ENCODE measurements at regions of chr10 and their contacts with region 1.

Region 1: GRCh38 chr10:109852475-109853037 is 70.8 kb downstream of the XPNPEP1 start:
- DNase-seq: peak; percentile 50
- ATAC-seq: peak; percentile 96
- H3K4me3 ChIP-seq: no peak overlapping the region
- H3K27ac ChIP-seq: no peak overlapping the region
- H3K4me1 ChIP-seq: no peaks in the 10 kb centered on the region
- H3K27me3 ChIP-seq: peaks cover 0 to 4% of the 10 kb centered on the region in 2 experiments; a peak in 1 of 5 replicates
- CTCF ChIP-seq: peak; percentile 92
- EP300 ChIP-seq: no peak
- POLR2A ChIP-seq: no peak
- RAD21 ChIP-seq: peak; percentile 68

Region 2: GRCh38 chr10:109411917-109412316 is 440.6 kb before region 1 on chr10:
- CTCF ChIA-PET with region 1: no interaction called
- POLR2A ChIA-PET with region 1: no interaction called
- in situ Hi-C with region 1: no loop called
- intact Hi-C with region 1: loop called (anchors 5 kb)
- DNase-seq: peak; percentile 5
- ATAC-seq: peak; percentile 82
- H3K4me3 ChIP-seq: no peak overlapping the region
- H3K27ac ChIP-seq: no peak overlapping the region
- H3K4me1 ChIP-seq: no peaks in the 10 kb centered on the region
- H3K27me3 ChIP-seq: no peaks in the 10 kb centered on the region
- CTCF ChIP-seq: peak; percentile 45
- EP300 ChIP-seq: no peak
- POLR2A ChIP-seq: no peak
- RAD21 ChIP-seq: no peak

Region 3: GRCh38 chr10:109714869-109715268 is 137.7 kb before region 1 on chr10:
- CTCF ChIA-PET with region 1: no interaction called
- POLR2A ChIA-PET with region 1: no interaction called
- in situ Hi-C with region 1: no loop called
- intact Hi-C with region 1: no loop called
- DNase-seq: no peak
- ATAC-seq: no peak
- H3K4me3 ChIP-seq: no peak overlapping the region
- H3K27ac ChIP-seq: no peak overlapping the region
- H3K4me1 ChIP-seq: no peaks in the 10 kb centered on the region
- H3K27me3 ChIP-seq: no peaks in the 10 kb centered on the region
- CTCF ChIP-seq: no peak
- EP300 ChIP-seq: no peak
- POLR2A ChIP-seq: no peak
- RAD21 ChIP-seq: no peak

Region 4: GRCh38 chr10:109773288-109774120 is 79.1 kb before region 1 on chr10:
- CTCF ChIA-PET with region 1: no interaction called
- POLR2A ChIA-PET with region 1: no interaction called
- in situ Hi-C with region 1: no loop called
- intact Hi-C with region 1: loop called (anchors 2 kb)
- DNase-seq: peak; percentile 26
- ATAC-seq: peak; percentile 86
- H3K4me3 ChIP-seq: no peak overlapping the region
- H3K27ac ChIP-seq: no peak overlapping the region
- H3K4me1 ChIP-seq: no peaks in the 10 kb centered on the region
- H3K27me3 ChIP-seq: no peaks in the 10 kb centered on the region
- CTCF ChIP-seq: peak; percentile 58
- EP300 ChIP-seq: no peak
- POLR2A ChIP-seq: no peak
- RAD21 ChIP-seq: no peak

Region 5: DNA sequence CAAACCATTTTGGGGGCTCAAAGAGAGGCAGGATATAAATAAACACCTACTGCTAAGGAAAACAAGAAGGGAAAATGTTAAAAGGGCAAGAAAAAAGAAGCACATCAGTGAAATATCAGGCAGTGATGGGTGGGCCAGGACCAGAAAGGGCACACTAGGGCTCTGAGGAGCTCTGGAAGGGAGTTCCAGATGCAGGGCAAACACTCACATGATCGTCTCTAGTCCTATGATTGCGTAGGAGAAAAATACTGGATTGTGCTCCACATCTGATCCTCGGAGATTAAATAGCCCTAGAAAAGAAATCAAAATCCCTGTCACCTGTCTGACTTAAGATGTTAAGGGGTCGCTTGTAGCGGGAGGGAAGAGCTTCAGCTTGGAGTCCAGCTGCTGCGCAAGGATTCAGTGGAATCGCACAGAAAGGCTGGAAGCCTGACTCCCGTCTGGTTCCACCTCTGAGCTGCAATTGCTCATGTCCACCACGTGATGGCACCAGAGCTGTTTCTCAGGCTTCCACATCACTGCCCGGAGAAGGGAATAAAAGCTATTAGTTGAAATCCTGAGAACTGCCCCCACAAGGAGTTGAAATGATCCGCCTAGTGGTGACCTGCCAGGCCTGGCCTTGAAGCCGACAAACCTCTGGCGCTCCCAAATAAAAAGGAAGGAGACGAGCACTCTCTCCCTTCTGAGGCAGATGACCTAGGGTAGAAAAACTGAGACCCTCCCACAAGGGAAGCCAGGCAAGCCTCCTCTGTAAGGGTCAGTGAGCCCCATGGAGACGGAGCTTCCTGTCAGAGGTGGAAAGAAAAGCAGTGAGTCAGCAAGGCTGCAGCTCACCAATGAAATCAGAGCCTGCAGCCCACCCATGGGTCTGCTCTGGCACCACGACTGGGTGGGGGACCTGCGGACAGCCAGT is 31.6 kb after region 1 on chr10:
- CTCF ChIA-PET with region 1: no interaction called
- POLR2A ChIA-PET with region 1: no interaction called
- in situ Hi-C with region 1: no loop called
- intact Hi-C with region 1: no loop called
- DNase-seq: peak; percentile 81
- ATAC-seq: peak; percentile 93
- H3K4me3 ChIP-seq: no peak overlapping the region
- H3K27ac ChIP-seq: no peak overlapping the region
- H3K4me1 ChIP-seq: peaks cover 7% of the 10 kb centered on the region; the same call in 1 of the 2 replicates
- H3K27me3 ChIP-seq: no peaks in the 10 kb centered on the region
- CTCF ChIP-seq: peak; percentile 93
- EP300 ChIP-seq: no peak
- POLR2A ChIP-seq: no peak
- RAD21 ChIP-seq: peak; percentile 95